MCF 10A (cell line): ENCODE measurements at regions of chr20 and their contacts with region 1.

Region 1: DNA sequence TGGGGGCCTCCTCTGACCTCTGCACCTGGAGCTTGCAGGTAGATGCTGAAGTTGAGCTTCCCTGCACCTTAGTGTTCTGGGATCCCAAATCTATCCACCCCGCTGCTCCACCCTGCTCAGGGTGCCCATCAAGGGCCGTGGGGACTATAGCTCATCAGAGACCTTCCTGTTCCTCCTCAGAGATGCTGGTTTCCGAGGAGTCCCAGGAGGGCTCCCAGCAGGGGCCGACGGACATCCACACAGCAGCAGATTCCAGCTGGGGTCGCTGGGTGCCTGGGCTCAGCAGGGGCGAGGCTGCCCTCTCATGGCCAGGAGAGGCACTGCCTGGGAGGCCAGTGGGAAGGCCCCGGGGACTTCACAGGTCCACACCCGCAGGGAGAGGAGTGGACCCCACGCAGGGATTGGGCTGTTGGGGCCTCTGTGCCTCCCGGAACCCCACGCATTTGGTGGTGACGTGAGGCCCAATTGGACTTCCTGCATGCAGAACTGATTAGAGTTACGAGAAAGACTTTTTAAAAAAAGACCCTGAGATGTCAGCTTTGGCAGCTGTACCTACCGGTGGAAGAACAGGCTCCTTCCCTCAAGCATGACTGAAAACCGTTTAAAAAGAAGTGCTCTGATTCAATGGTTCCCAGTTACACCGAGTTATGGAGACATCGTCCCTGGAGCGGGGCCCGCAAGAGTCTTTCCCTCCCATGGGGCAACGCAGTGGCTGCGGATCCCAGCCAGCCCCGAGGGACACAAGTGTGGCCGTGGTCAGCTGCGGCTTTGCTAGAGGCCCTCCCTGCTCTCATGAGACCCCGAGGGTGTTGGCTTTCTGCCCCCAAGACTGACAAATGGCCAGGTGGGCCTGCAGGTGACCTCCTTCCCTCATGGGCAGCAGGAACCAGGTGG is 25.3 kb upstream of the SLCO4A1 start:
- DNase-seq: peak; percentile 75
- H3K4me3 Mint-ChIP-seq: peak overlapping the region; percentile 3
- H3K27ac Mint-ChIP-seq: no peak overlapping the region
- H3K4me1 Mint-ChIP-seq: peaks cover 2% of the 10 kb centered on the region
- H3K27me3 Mint-ChIP-seq: no peaks in the 10 kb centered on the region
- CTCF ChIP-seq: peak; percentile 98

Region 2: DNA sequence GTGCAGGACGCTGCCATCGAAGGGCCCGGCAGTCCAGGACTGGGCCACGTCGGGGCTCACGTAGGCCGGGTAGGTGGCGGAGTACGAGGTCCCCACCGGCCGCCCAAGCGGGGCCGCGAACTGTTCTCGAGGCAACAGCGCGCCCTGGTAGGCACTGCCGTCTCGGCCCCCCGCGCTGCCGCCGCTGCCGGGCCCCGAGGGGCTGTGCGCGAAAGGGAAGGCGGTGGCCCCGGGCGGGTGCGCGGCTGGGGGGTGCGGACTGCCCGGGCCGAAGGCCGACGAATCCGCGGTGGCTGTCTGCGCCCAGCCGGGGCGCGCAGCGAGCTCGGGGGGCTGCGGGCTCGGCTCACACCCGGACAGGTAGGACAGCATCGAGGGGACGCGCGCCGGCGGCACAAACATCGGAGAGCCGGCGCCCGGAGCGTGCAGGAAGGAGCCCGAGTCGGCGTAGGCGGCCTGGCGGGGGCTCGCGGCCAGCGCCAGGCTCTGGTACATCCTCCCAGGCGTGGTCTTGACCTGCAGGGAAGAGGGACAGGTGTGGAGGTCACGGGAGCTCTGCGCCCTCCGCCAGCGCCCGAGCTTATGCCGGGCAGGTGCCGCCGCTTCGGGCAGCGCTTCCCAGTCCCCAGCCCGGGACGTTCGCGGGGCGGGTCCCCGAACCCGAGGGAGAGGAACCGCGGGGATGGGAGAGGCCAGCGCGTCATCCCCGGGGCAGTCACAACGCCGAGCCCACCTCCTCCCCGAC is 141.8 kb before region 1 on chr20:
- CTCF ChIA-PET with region 1: no interaction called
- POLR2A ChIA-PET with region 1: no interaction called
- intact Hi-C with region 1: no loop called
- DNase-seq: no peak
- H3K4me3 Mint-ChIP-seq: no peak overlapping the region
- H3K27ac Mint-ChIP-seq: no peak overlapping the region
- H3K4me1 Mint-ChIP-seq: no peaks in the 10 kb centered on the region
- H3K27me3 Mint-ChIP-seq: peaks cover 44% of the 10 kb centered on the region
- CTCF ChIP-seq: no peak

Region 3: GRCh38 chr20:62489186-62489931 is 127.6 kb before region 1 on chr20:
- CTCF ChIA-PET with region 1: interaction called, 17 read pairs
- POLR2A ChIA-PET with region 1: no interaction called
- intact Hi-C with region 1: no loop called
- DNase-seq: peak; percentile 47
- H3K4me3 Mint-ChIP-seq: no peak overlapping the region
- H3K27ac Mint-ChIP-seq: no peak overlapping the region
- H3K4me1 Mint-ChIP-seq: no peaks in the 10 kb centered on the region
- H3K27me3 Mint-ChIP-seq: peaks cover 11% of the 10 kb centered on the region
- CTCF ChIP-seq: no peak

Region 4: GRCh38 chr20:62500237-62500864 is 116.6 kb before region 1 on chr20:
- CTCF ChIA-PET with region 1: interaction called, 63 read pairs
- POLR2A ChIA-PET with region 1: interaction called, 3 read pairs
- intact Hi-C with region 1: loop called (anchors 1 kb)
- DNase-seq: peak; percentile 63
- H3K4me3 Mint-ChIP-seq: no peak overlapping the region
- H3K27ac Mint-ChIP-seq: no peak overlapping the region
- H3K4me1 Mint-ChIP-seq: peaks cover 19% of the 10 kb centered on the region
- H3K27me3 Mint-ChIP-seq: no peaks in the 10 kb centered on the region
- CTCF ChIP-seq: peak; percentile 83

Region 5: GRCh38 chr20:62576815-62577506 is 40.0 kb before region 1 on chr20:
- CTCF ChIA-PET with region 1: interaction called, 12 read pairs
- POLR2A ChIA-PET with region 1: no interaction called
- intact Hi-C with region 1: no loop called
- DNase-seq: no peak
- H3K4me3 Mint-ChIP-seq: no peak overlapping the region
- H3K27ac Mint-ChIP-seq: no peak overlapping the region
- H3K4me1 Mint-ChIP-seq: no peaks in the 10 kb centered on the region
- H3K27me3 Mint-ChIP-seq: peaks cover 61% of the 10 kb centered on the region
- CTCF ChIP-seq: no peak

Region 6: GRCh38 chr20:62603021-62603906 is 13.7 kb before region 1 on chr20:
- CTCF ChIA-PET with region 1: interaction called, 34 read pairs
- POLR2A ChIA-PET with region 1: interaction called, 7 read pairs
- intact Hi-C with region 1: no loop called
- DNase-seq: peak; percentile 93
- H3K4me3 Mint-ChIP-seq: peak overlapping the region; percentile 56
- H3K27ac Mint-ChIP-seq: peak overlapping the region; percentile 13
- H3K4me1 Mint-ChIP-seq: peaks cover 41% of the 10 kb centered on the region
- H3K27me3 Mint-ChIP-seq: no peaks in the 10 kb centered on the region
- CTCF ChIP-seq: no peak